Astrocyte of the spinal cord (primary cell): ENCODE measurements at regions of chr3 and their contacts with region 1.

Region 1: GRCh38 chr3:142828703-142829305 is 60.1 kb downstream of the PCOLCE2 start:
- DNase-seq: peak; percentile 81
- H3K4me3 ChIP-seq: no peak overlapping the region
- CTCF ChIP-seq: peak; percentile 97

Region 2: DNA sequence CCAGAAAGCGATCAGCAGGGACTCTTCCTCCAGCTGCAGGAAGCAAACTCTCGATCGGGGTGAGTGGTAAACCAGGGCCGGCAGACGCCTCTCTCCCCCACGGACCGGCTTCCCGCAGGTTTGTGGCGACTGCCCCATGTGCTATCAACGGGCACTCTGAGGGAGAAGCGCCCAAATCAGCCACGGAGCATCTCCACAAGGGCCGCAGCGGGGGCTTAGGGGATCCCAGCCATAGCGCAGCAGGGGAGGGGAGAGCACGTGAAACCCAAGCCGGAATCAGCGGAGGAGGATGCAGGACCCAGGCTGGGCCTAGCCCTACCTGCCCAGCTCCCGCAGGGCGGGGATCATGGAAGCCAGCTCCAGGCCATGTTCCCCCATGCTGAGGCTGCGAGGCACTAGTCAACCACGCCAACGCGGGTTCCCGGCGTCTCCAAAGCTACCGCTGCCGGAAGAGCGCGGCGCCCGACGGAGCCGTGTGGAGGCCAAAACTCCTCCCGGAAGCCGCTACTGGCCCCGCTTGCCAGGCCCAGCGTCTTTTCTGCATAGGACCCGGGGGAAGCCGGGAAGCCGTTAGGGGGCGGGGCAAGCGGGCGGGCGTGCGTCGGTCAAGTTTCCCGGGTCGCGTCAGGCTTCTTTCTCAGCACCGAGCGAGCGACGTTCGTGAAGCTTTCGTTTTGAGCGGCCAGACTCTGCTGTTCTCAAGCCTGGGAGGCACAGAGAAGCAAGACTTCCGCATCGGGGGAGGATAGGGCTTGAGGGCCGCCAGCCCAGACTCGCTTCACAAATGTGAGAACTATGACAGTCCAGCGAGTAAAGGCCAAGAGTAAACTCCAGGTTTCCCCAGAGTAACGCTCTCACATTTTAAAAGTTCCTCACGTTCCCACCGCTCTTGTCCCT is 250.2 kb before region 1 on chr3 and contains the start of gene ATR:
- in situ Hi-C with region 1: loop called (anchors 25 kb)
- DNase-seq: peak; percentile 98
- H3K4me3 ChIP-seq: peak within 1 kb of the TSS; percentile 97
- CTCF ChIP-seq: no peak